ENCODE measurements at regions of chr12 and their contacts with region 1.

Region 1: DNA sequence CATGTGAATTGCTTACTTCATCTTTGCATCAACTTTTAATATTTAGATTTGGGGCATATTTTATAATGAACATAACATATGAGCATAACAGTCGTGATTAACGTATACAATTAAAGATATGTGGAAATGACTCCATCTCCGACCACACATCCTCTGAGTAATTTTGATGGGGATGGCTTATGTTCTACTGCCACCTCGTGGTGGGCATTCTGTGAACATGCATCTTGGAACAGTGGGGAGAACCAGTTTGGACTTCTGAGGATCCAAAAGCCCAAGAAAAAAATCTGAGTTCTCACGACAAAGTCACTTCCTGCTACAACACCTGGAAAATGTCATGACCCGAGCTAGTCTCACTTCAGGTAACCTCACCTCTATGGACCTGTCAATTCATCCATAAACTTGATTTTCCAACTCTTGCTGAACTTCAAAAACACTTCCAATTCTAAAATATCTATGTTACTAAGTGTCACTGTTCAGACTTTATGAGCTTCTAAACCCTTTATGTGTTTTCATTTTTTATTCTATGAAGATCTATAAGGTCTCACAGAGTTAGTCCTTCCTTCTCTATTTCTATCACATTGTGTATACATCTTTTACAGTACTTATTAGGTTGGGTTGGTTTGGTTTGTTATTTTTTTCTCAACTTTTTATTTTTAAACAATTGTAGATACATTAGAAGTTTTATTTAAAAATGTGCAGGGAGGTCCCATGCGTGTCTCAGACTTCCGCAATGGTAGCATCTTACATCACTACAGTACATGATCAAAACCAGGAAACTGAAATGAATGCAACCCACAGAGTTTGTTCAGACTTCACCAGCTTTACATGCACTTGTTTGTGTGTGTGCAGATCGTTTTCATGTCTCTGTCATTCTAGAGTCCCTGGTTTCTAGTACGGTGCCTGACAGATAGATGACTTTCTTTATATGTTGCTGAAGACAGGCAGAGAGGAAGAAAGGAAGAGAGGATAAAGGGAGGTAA is 38.2 kb upstream of the STAB2 start:
- DNase-seq: peak; percentile 54
- ATAC-seq: peak in 1 of 2 donors; percentile 65

Region 2: DNA sequence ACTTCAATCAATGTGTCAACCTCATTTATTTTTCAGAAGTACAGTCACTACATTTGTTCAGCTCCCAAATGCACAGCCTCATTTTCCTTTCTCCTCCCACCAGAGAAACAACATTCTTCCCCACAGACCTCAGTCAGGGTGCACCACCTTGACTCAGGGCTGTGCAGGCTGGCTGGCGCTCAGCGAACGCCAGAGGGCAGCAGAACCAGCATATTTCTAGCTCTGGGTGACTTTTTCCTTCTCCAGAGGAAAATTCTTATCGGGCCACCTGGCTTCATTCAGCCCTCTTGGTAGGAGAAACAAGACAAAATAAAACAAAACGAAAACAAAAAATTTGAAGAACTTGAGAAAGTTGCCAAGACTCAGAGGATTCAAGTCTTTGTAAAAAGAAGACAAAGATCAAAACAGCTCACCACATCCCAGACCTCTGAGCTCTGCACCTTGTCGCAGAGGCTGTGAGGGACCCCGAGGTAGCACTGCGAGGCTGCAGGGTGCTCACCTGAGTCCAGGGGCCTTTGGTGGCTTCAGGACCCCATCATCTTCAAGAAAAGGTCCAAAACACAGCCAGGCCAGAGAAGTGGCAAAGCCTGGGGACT is 665.6 kb before region 1 on chr12:
- intact Hi-C with region 1: loop called (anchors 2 to 5 kb)
- DNase-seq: peak; percentile 53
- ATAC-seq: peak in 1 of 2 donors; percentile 79

Region 3: DNA sequence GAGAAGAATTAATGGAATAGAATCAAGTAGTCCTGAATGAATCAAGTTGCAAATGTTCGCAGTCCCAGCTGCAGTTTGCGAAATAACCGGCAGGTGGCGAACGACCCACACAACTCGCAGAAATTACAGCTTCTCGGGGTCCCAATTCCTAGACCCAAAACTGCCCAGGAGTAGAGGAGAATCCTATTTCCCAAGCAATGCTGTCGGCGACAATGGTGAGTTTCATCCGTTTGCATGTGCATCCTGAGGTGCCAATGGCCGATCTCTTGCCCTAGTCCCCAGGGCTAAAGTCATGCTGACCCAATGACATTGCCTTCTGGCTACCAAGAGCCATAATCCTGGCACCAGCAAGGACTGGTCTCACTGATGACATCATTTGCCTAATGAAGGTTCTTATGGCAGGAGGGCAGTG is 600.0 kb before region 1 on chr12:
- intact Hi-C with region 1: loop called (anchors 5 kb)
- DNase-seq: no peak
- ATAC-seq: no peak